ENCODE measurements at regions of chr17 and their contacts with region 1.

Region 1: DNA sequence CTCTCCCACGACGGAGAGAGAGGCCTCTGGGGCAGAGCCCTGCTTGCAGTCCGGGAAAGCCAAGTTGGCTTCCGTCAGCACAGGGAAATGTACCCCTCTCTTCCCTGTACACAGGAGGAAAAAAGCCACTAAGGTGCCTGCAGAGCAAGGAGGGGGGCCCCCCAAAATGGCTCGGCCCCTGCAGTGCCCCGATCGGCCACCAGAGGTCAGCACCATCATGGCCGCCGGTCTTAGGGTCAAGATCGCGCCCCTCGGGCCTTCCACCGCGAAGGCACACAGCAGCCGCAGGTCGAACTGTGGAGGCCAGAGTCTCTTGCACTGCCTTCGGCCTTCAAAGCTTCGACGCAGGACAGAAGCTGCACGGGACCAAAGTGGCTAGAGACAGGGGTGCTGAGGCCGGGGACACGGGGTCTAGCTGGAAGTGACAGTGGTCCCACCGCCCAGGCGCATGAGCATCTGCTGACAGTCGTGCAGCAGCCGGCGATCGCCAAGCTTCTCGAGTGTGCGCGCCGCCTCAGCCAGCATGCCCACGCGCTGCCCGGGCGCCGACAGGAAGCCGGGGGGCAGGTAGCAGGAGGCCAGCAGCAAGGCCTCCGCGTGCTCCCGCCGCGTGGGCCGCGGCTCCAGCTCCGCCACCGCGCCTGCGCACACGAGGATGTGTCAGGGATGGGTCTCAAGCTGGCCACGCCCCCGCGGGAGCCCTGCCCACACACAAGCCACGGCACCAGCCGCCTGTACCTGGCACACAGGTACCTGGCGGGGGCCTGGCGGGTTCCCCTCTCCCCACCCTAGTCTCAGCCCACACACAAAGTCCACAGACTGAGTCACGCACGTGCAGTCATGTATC is 24.4 kb downstream of the SREBF1 start:
- H3K4me3 ChIP-seq: no peak overlapping the region
- H3K27ac ChIP-seq: peak overlapping the region; percentile 52; the same call in 1 of the 2 replicates
- H3K4me1 ChIP-seq: peaks cover 6% of the 10 kb centered on the region
- CTCF ChIP-seq: peak; percentile 92

Region 2: GRCh38 chr17:17681187-17681848 is 131.1 kb before region 1 on chr17 and contains the start of gene RAI1:
- CTCF ChIA-PET with region 1: interaction called, 11 read pairs
- POLR2A ChIA-PET with region 1: interaction called, 6 read pairs
- H3K4me3 ChIP-seq: peak within 1 kb of the TSS; percentile 76
- H3K27ac ChIP-seq: peak within 1 kb of the TSS; percentile 96
- H3K4me1 ChIP-seq: peaks cover 25% of the 10 kb centered on the region
- CTCF ChIP-seq: no peak

Region 3: DNA sequence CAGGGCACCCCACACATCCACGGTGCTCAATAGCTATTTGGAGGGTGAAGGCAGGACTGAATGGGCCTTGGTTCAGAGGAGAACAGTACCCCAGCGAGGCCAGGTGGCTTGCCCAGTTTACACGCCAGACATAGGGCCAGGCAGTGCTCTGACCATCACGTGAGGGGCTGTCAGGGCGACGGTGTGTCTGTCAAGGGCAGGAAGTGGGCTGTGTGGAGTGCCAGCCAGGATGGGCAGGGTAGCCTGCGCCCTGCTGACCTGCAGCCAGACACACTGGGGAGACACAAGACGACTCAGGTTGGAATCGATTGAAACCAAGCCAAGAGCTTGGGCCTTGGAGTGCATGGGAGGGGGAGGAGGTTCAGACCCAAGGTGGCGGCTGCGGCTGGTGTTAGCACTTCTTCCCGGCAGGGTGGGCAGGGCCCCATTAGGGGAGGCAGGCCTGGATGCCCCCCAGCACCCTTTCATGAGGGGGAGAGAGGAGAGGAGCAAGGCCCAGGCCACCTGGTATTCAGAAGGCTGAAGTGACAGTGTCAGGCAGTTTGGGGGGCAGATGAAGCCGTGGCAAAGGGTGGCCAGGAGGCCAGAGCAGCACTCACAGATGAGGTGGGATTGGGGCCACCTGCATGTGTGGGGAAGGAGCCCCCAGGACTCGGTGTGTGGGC is 43.9 kb before region 1 on chr17:
- CTCF ChIA-PET with region 1: no interaction called
- POLR2A ChIA-PET with region 1: no interaction called
- H3K4me3 ChIP-seq: no peak overlapping the region
- H3K27ac ChIP-seq: no peak overlapping the region
- H3K4me1 ChIP-seq: peaks cover 13% of the 10 kb centered on the region
- CTCF ChIP-seq: no peak

Region 4: DNA sequence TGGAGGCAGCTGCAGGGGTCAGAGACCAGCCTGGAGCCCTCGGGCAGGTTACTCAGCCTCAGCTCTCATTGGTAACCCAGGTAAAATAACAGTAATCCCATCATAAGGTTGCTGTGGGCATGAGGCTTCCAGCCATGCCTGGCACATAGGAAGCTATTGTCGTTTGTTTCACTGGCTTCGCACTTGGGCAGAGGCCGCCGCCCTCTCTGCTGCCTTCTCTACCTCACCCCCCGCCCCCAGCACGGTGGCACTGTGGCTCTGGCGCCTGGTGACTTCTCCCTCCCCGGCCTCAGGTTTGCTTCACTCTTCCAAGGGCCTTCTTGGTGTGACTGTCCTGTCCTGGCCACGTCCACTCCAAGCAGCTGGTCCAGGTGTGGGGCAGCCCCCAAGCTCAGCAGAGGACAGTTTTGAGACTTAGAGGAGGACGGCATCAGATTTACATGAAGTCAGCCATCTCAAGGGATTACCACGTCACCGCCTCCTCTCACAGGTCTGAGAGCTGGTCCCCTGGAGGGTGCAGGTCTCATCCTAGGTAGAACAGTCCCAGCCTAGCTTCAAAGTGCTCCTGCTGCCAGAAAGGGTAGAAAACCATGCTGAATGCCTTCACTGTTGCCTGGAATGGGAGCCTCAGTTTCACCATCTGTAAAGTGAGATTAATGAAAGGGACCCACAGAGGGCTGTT is 10.5 kb before region 1 on chr17:
- CTCF ChIA-PET with region 1: interaction called, 12 read pairs
- POLR2A ChIA-PET with region 1: no interaction called
- H3K4me3 ChIP-seq: no peak overlapping the region
- H3K27ac ChIP-seq: no peak overlapping the region
- H3K4me1 ChIP-seq: no peaks in the 10 kb centered on the region
- CTCF ChIP-seq: no peak

Region 5: GRCh38 chr17:17823433-17824118 is 11.1 kb after region 1 on chr17:
- CTCF ChIA-PET with region 1: interaction called, 35 read pairs
- POLR2A ChIA-PET with region 1: interaction called, 5 read pairs
- H3K4me3 ChIP-seq: peak overlapping the region; percentile 12; the same call in 1 of the 2 replicates
- H3K27ac ChIP-seq: peak overlapping the region; percentile 94
- H3K4me1 ChIP-seq: peaks cover 35% of the 10 kb centered on the region
- CTCF ChIP-seq: no peak

Region 6: GRCh38 chr17:17836250-17836817 is 23.9 kb after region 1 on chr17:
- CTCF ChIA-PET with region 1: interaction called, 17 read pairs
- POLR2A ChIA-PET with region 1: interaction called, 181 read pairs
- H3K4me3 ChIP-seq: peak overlapping the region; percentile 63
- H3K27ac ChIP-seq: peak overlapping the region; percentile 99
- H3K4me1 ChIP-seq: peaks cover 34% of the 10 kb centered on the region
- CTCF ChIP-seq: peak; percentile 50

Region 7: DNA sequence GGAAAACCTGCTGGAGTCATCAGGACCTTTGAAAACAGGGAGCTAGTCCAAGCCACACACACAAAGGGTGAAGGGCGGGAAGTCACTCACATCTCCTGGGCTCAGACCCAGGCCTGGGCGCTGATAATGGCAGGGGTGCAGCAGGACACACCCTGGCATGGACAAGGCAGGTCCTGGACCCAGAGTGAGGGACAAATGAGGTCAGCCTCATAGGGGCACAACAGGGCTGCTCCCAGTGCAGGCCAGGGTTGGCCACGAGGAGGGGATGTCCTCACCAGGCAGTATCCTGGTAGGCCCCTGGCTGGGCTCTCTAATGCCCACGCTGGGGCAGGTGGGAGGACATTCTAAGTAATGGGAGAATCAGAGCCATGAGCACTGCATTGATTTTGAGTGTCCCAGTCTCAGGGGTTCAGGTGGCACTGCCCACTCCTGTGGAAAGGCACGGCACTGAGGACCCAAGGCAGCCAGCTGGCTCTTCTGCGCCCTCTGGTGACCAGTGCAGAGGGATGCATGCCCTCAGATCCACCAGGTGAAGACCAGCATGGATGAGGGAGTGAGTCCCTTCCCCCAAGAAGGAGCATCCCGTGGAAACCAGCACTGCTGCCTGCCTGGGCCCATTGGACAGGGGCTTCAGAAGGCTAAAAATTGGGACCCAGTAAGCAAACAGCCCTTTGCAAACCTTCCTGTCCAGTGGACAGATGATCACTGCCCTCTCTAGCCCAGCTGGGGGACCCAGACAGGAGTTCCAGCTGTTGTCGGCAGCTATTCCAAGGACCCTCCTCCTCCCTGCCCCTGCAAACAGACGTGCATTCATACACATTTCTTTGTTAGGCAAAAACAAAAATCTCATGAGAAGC is 47.7 kb after region 1 on chr17:
- CTCF ChIA-PET with region 1: interaction called, 40 read pairs
- POLR2A ChIA-PET with region 1: no interaction called
- H3K4me3 ChIP-seq: no peak overlapping the region
- H3K27ac ChIP-seq: no peak overlapping the region
- H3K4me1 ChIP-seq: no peaks in the 10 kb centered on the region; the same call in 1 of the 2 replicates
- CTCF ChIP-seq: peak; percentile 97